Gastrocnemius medialis (tissue), 4 donors: ENCODE measurements at regions of chr2 and their contacts with region 1.

Region 1: DNA sequence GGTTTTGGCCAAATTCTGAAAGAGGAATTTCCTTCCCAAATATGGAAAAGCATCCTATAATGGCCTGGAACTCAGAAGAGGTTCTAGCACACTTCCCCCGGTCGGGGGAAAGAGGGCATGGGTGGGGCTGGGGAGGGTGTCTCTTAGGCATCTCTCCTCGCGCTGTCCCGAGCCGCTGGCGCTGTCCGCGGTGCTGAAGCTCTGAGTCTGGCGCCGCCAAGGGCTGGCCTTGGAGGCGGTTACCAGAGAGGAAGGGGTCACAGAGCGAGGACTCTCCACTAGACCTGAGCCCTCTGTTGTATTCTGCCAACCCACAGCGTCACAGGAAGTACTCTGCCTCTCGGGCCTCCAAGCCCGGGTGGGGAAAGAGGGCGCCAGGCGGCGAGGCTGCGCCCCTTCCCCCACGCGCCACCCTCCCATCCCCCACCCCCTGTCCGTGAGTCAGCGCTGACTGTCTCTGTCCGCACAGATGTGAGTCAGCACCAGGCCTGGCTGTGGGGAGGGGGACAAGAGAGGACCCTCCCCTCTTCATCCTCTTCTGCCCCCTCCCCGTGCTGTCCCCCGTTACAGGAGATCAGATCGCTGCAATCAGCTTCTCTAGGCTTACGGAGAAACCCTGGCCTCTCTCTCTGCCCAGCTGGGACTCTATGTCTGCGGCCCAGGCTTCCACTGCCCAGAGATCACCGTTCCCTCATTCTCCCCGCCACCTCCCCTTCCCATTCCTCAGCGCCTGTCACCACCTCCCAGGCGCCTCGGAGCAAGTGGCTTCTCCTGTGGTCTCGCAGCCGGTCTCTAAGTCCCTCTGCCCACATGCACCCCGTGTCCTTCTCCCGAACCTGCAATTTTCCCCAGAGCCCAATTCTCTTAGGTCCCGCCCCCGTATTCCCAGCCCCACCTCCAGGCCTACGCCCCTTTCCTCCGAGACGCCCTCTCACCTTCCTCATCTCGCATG is 783 bp downstream of the PTPRN start:
- DNase-seq: no peak
- ATAC-seq: peak in 1 of 2 donors; percentile 42
- H3K4me3 ChIP-seq: no peak overlapping the region
- H3K27ac ChIP-seq: no peak overlapping the region
- H3K4me1 ChIP-seq: no peaks in the 10 kb centered on the region
- H3K27me3 ChIP-seq: peaks cover 28 to 49% (median 30%) of the 10 kb centered on the region in 3 donors
- CTCF ChIP-seq: no peak
- POLR2A ChIP-seq: no peak

Region 2: GRCh38 chr2:219002395-219003266 is 305.8 kb before region 1 on chr2:
- in situ Hi-C with region 1: loop called in 1 of 4 experiments (anchors 25 kb)
- intact Hi-C with region 1: no loop called
- DNase-seq: no peak
- ATAC-seq: no peak
- H3K4me3 ChIP-seq: peak overlapping the region in 1 of 4 donors; percentile 36
- H3K27ac ChIP-seq: no peak overlapping the region
- H3K4me1 ChIP-seq: peaks cover 0 to 15% of the 10 kb centered on the region in 2 donors
- H3K27me3 ChIP-seq: peaks cover 50 to 63% (median 56%) of the 10 kb centered on the region in 3 donors
- CTCF ChIP-seq: peak in 2 of 5 experiments; percentile 39 to 59
- POLR2A ChIP-seq: no peak

Region 3: GRCh38 chr2:219041252-219041651 is 267.2 kb before region 1 on chr2 and contains the start of gene CFAP65:
- in situ Hi-C with region 1: loop called in 1 of 4 experiments (anchors 10 kb)
- intact Hi-C with region 1: no loop called
- DNase-seq: no peak
- ATAC-seq: no peak
- H3K4me3 ChIP-seq: peak within 1 kb of the TSS in 2 of 4 donors; percentile 24 to 35
- H3K27ac ChIP-seq: no peak within 1 kb of the TSS
- H3K4me1 ChIP-seq: peaks cover 0 to 4% of the 10 kb centered on the region in 2 donors
- H3K27me3 ChIP-seq: peaks cover 35 to 63% (median 36%) of the 10 kb centered on the region in 3 donors
- CTCF ChIP-seq: no peak
- POLR2A ChIP-seq: no peak
- total RNA-seq, gene CFAP65: 0.09 TPM in 1 of 4 donors, not detected in the others

Region 4: DNA sequence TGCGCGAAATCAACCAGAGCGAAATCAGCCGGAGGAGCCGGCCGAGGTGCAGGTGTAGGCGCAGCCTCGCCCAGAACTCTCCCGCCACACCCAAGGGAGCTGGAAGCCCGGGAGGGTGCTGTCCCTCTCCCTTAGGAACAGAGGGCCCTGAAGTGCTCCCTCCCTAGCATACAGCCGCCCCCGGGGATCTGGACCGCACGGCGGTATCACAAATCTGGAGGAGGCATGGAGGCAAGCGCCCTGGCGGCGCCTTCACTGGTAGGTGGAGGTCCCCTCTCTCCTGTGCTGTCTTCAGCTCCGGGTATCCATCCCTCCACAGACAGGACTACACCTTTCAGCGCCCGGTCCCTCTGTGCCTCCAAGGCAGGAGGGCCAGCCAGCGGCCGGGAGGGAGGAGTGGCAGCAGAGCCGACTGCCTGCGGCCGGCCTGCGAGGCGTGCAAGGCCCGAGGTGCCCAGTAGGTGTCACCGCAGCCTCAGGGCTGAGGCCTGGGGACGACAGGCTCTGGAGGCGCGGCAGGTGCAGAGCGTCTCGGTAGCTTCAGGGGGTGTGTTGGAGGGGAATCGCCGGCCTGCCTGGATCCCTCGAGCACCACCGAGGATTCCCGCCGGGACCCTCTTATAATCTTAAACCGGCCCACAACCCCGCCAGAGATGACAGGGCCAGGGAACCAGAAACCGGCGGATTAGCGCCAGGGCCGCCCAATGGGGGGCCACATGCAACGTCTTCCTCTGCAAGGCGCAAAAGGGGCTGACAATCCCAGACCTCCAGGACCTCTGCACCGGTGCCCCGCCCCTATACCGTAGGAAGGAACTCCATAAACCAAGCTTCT is 250.5 kb before region 1 on chr2:
- in situ Hi-C with region 1: loop called in 1 of 4 experiments (anchors 25 kb)
- intact Hi-C with region 1: no loop called
- DNase-seq: peak; percentile 36 to 54
- ATAC-seq: peak; percentile 73 to 81
- H3K4me3 ChIP-seq: peak overlapping the region in 2 of 4 donors; percentile 10 to 40
- H3K27ac ChIP-seq: no peak overlapping the region
- H3K4me1 ChIP-seq: peaks cover 13 to 24% of the 10 kb centered on the region in 2 donors
- H3K27me3 ChIP-seq: peaks cover 70 to 81% (median 76%) of the 10 kb centered on the region in 3 donors
- CTCF ChIP-seq: peak; percentile 88 to 98 (median 93)
- POLR2A ChIP-seq: no peak